ENCODE measurements at regions of chr15 and their contacts with region 1.

Region 1: GRCh38 chr15:59492389-59493377 is 54.7 kb downstream of the FAM81A start:
- DNase-seq: peak; percentile 76
- H3K4me3 ChIP-seq: no peak overlapping the region
- H3K27ac ChIP-seq: no peak overlapping the region
- H3K4me1 ChIP-seq: no peaks in the 10 kb centered on the region
- CTCF ChIP-seq: peak; percentile 98

Region 2: DNA sequence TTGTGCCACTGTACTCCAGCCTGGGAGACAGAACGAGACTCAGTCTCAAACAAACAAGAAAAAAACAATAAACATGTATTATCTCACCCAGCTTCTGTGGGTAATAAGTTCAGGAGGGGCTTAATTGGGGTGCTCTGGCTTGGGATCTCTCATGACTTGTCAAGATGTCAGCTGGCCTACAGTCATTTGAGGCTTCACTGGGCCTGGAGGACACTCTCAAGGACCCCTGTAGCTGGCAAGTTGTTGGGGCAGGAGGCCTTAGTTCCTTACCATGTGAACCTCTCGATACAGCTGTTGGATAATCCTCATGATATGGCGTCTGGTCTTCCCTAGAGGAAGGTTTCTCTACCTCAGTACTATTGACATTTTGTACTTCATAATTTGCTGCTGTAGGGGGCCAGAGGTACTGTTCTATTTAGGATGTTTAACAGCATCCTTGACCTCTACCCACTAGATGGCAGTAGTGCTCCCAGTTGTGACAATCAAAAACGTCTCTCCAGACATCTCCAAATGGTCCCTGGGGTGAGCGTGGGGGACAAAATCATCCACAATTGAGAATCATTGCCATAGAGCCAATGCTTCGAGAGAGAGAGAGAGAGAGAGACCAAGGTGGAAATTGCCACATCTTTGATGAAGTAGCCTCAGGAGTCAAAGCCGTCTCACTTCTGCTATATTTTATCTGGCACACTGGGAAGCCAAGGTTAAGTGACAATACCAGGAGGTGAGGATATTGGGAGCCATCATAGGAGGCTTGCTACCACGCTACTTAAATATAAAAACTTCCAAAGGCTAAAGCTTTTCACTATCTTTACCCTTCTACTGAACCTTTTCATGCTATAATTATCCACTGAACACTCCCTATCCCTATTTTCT is 535.3 kb before region 1 on chr15:
- CTCF ChIA-PET with region 1: no interaction called
- POLR2A ChIA-PET with region 1: interaction called, 4 read pairs
- intact Hi-C with region 1: loop called (anchors 5 kb)
- DNase-seq: peak; percentile 88
- H3K4me3 ChIP-seq: no peak overlapping the region
- H3K27ac ChIP-seq: no peak overlapping the region
- H3K4me1 ChIP-seq: peaks cover 8% of the 10 kb centered on the region
- CTCF ChIP-seq: peak; percentile 97

Region 3: GRCh38 chr15:59174835-59175831 is 317.6 kb before region 1 on chr15:
- CTCF ChIA-PET with region 1: interaction called, 3 read pairs
- POLR2A ChIA-PET with region 1: no interaction called
- intact Hi-C with region 1: loop called (anchors 1 kb)
- DNase-seq: peak; percentile 71
- H3K4me3 ChIP-seq: no peak overlapping the region
- H3K27ac ChIP-seq: no peak overlapping the region
- H3K4me1 ChIP-seq: no peaks in the 10 kb centered on the region
- CTCF ChIP-seq: peak; percentile 85

Region 4: DNA sequence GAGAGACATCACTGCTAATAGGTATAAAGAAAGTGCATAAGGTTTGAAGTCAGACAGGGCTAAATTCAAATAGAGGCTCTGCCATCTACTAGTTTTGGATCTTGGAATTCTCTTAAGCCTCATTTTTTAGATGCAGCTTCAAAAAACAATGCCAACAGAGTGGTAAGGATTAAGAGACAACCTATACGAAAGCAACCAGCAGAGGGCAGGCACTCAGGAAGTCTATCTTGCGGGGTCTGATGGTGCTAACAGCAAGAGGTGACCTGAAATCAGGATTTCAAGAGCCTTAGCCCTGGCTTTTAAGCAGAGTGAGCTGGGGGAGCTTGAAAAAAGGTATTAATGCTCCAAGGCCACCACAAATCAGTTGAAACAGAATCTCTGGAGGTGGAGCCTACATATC is 245.3 kb before region 1 on chr15:
- CTCF ChIA-PET with region 1: interaction called, 4 read pairs
- POLR2A ChIA-PET with region 1: interaction called, 3 read pairs
- intact Hi-C with region 1: loop called (anchors 1 kb)
- DNase-seq: peak; percentile 88
- H3K4me3 ChIP-seq: no peak overlapping the region
- H3K27ac ChIP-seq: no peak overlapping the region
- H3K4me1 ChIP-seq: peaks cover 64% of the 10 kb centered on the region
- CTCF ChIP-seq: peak; percentile 93

Region 5: GRCh38 chr15:59376733-59377132 is 116.0 kb before region 1 on chr15:
- CTCF ChIA-PET with region 1: interaction called, 3 read pairs
- POLR2A ChIA-PET with region 1: no interaction called
- intact Hi-C with region 1: loop called (anchors 2 kb)
- DNase-seq: peak; percentile 65
- H3K4me3 ChIP-seq: no peak overlapping the region
- H3K27ac ChIP-seq: no peak overlapping the region
- H3K4me1 ChIP-seq: peaks cover 24% of the 10 kb centered on the region
- CTCF ChIP-seq: peak; percentile 78

Region 6: GRCh38 chr15:59699810-59700431 is 207.2 kb after region 1 on chr15:
- CTCF ChIA-PET with region 1: no interaction called
- POLR2A ChIA-PET with region 1: no interaction called
- intact Hi-C with region 1: no loop called
- DNase-seq: no peak
- H3K4me3 ChIP-seq: no peak overlapping the region
- H3K27ac ChIP-seq: no peak overlapping the region
- H3K4me1 ChIP-seq: no peaks in the 10 kb centered on the region
- CTCF ChIP-seq: no peak

Measured in OCI-LY7 (cell line).